ENCODE measurements at regions of chr3 and their contacts with region 1.

Region 1: DNA sequence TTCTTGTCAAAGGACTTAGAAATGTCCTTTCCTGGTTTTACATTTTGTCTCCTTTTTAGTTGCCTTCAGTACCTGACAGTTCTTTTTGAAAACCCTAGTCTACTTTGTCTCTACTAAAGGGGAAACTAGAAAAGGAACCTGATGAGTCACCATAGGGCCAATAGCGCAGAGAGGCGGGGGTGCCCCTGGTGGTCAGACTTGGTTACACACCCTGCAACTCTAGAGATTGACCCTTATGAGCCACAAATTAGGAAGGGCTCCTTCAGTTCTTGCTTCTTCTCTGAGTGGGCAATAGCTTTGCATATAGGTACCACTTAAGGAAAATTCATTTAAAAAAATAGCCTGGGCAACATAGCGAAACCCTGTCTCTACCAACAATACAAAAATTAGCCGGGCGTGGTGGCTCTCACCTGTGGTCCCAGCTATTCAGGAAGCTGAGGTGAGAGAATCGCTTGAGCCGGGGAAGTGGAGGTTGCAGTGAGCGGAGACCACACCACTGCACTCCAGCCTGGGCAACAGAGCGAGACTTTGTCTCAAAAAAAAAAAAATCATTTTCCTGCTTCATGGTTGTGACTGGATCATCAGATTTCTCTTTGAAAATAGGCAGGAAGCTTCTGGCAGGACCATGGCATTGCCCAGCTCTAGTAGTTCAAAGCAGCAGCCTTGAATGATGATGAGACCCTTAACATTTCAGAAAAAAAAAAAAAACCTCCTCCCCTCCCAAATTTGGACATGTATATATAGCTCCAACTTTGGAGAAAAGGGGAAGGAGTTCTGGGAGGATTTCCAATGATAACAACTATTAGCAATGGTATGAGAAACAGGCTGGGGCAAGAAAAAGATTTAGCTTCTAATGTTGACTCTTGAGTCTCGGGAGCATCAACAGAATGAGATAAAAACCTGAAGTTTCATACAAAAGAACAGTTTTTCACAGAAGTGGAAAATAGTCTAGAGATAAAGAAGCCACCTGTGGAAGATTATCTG is 45.2 kb upstream of the RASA2 start:
- DNase-seq: peak; percentile 59
- H3K4me3 Mint-ChIP-seq: no peak overlapping the region
- H3K27ac Mint-ChIP-seq: peak overlapping the region; percentile 3
- H3K4me1 Mint-ChIP-seq: peaks cover 17% of the 10 kb centered on the region
- H3K27me3 Mint-ChIP-seq: no peaks in the 10 kb centered on the region

Region 2: DNA sequence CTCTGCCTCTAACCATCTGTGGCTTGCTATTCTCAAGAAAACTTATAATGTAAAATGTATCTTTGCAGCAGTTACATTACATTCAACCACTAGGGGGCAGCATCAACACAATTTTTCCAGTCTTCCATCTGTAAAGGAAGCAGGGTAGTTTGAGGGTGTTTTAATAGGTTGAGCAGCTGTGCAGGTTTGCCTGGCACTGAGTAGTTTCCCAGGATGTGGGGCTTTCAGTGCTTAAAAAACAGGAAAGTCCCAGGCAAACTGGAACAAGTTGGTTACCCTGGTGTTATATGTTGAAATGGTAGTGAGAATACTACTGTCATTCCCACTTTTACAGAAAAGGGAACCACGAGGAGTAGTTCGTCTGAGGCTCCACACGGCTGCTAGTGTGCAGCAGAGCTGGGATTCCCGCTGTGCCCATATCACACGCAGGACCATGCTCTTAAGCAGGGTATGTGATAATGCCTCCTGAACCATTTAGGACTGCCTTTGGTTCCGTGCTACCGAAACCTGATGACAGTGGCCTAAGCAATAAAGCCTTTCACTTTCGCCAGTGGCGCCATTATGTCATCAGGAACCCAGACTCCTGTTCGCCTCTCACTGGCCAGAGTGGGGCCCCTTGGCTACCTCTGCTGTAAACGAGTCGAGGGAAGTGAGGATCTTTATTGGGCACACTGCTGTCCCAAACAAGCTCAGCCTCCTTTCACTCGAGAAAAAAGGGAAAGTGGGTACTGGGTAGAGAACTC is 138.0 kb before region 1 on chr3:
- intact Hi-C with region 1: loop called (anchors 1 kb)
- DNase-seq: peak; percentile 52
- H3K4me3 Mint-ChIP-seq: no peak overlapping the region
- H3K27ac Mint-ChIP-seq: no peak overlapping the region
- H3K4me1 Mint-ChIP-seq: peaks cover 34% of the 10 kb centered on the region
- H3K27me3 Mint-ChIP-seq: peaks cover 4% of the 10 kb centered on the region

Region 3: GRCh38 chr3:141360888-141361598 is 80.6 kb before region 1 on chr3:
- intact Hi-C with region 1: loop called (anchors 1 kb)
- DNase-seq: no peak
- H3K4me3 Mint-ChIP-seq: no peak overlapping the region
- H3K27ac Mint-ChIP-seq: no peak overlapping the region
- H3K4me1 Mint-ChIP-seq: peaks cover 10% of the 10 kb centered on the region
- H3K27me3 Mint-ChIP-seq: peaks cover 20% of the 10 kb centered on the region

Region 4: DNA sequence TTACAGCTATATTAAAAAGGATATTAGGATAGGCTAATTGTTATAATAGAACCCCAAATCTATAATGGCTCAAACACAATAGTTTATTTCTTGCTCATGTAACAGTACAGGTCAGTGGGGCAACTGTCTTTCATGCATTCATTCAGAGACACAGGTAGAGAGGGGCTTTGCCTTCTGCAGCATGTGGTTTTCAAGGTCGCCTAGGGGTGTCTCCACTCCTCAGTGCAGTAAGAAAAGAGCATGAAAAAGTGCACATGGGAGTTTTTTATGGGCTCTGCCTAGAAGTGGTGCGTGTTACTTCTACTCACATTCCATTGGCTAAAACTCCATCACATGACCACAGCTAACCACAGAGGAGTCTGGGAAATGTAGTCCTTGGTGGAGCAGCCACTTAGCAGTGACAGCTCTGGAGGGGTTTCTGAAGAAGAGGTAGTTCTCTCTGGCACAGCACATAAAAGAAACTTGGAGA is 71.6 kb before region 1 on chr3:
- intact Hi-C with region 1: loop called (anchors 1 kb)
- DNase-seq: peak; percentile 50
- H3K4me3 Mint-ChIP-seq: no peak overlapping the region
- H3K27ac Mint-ChIP-seq: no peak overlapping the region
- H3K4me1 Mint-ChIP-seq: peaks cover 27% of the 10 kb centered on the region
- H3K27me3 Mint-ChIP-seq: no peaks in the 10 kb centered on the region

Region 5: DNA sequence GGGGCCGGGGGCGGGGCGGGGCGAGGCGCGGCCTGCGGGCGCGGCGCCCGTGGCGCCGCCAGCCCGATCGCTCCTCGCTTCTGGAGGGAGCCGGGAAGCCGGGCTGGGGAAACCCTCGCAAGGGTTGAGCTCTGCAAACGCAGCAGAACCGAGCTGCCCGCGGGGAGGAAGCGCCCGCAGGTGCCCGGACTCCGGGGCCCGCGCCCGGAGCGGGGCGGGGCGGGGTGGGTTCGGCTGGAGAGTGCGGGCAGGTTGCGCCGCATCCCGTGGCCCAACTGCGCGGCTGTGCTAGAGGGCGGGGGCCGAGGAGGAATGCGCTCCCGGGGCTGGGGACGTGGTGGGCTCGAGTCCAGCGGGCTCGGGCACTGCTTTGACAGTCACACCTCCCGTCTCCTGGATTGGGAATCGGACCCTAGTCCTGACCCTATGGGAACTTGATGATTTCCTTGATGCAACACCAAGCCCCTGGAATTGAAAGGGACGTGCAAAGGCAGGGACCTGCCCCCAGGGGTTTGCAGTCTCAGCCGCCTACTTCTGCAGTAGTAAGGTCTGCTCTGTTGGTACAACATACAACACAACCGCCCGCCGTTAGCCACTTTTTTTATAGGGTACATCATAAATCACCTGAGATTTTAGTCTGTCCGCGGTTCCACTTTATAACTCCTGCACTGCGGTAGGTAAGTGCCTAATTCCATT is 39.0 kb before region 1 on chr3:
- intact Hi-C with region 1: loop called (anchors 1 kb)
- DNase-seq: peak; percentile 36
- H3K4me3 Mint-ChIP-seq: peak overlapping the region; percentile 85
- H3K27ac Mint-ChIP-seq: peak overlapping the region; percentile 62
- H3K4me1 Mint-ChIP-seq: peaks cover 31% of the 10 kb centered on the region
- H3K27me3 Mint-ChIP-seq: no peaks in the 10 kb centered on the region

Region 6: DNA sequence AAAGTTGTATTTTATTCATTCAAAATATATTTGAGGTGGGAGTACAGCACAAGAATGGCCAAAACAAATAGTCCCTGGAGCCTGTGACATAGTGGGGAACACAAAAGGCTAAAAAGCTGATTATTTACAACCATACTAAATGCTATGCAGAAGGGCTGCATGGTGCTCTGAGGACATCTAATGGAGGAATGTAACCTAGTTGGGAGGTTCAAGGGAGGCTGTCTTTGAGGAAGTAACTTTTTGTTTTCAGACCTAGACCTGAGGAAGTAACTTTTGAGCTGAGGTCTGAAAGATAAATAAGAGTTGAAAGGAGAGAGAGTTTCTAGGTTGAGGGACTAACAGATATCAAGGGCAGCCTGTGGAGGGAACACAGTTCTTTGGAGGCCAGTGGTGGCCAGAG is 10.4 kb after region 1 on chr3:
- intact Hi-C with region 1: loop called (anchors 1 kb)
- DNase-seq: peak; percentile 26
- H3K4me3 Mint-ChIP-seq: no peak overlapping the region
- H3K27ac Mint-ChIP-seq: no peak overlapping the region
- H3K4me1 Mint-ChIP-seq: peaks cover 18% of the 10 kb centered on the region
- H3K27me3 Mint-ChIP-seq: no peaks in the 10 kb centered on the region

Measured in activated T-helper 1 cell treated with anti-CD3 and anti-CD28 coated beads, Interleukin-12 subunit alpha, Interleukin-12 subunit beta, Interleukin-2, Interleukin-4 antibody, amounts not matched to agents 30 ng/mL and 10 ng/mL and 1 ng/mL, durations not matched to agents 14 hours and 24 hours and 36 hours (primary cell).